ENCODE measurements at regions of chr6 and their contacts with region 1.

Region 1: DNA sequence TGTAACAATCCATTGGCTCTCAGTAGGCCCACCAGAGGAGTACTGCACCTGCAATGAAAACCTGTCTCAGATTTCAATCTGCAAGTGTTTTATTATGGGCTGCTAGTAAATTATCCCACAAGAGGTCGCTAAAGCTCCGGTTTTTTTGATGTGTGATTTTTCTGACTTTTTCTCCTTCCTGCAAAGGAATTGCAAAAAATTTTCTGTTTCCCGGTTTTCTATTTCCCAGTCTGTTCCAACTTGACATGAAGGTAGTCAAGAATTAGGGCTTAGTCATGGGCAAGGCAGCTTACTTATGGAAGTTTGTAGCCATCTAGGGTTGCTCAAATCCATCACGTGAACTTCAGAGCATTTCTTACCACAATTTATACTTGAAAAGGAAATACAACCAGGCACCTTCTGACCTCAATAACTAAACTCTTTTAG is 38.5 kb upstream of the AHI1 start:
- DNase-seq: peak; percentile 18
- ATAC-seq: no peak
- H3K4me3 Mint-ChIP-seq: no peak overlapping the region
- H3K27ac Mint-ChIP-seq: peak overlapping the region; percentile 70
- H3K4me1 Mint-ChIP-seq: peaks cover 33% of the 10 kb centered on the region
- H3K27me3 Mint-ChIP-seq: peaks cover 2% of the 10 kb centered on the region
- CTCF ChIP-seq: peak; percentile 87

Region 2: GRCh38 chr6:135506270-135506997 is 29.6 kb before region 1 on chr6:
- CTCF ChIA-PET with region 1: interaction called, 10 read pairs
- POLR2A ChIA-PET with region 1: no interaction called
- intact Hi-C with region 1: no loop called
- DNase-seq: peak; percentile 54
- ATAC-seq: peak; percentile 89
- H3K4me3 Mint-ChIP-seq: peak overlapping the region; percentile 35
- H3K27ac Mint-ChIP-seq: peak overlapping the region; percentile 69
- H3K4me1 Mint-ChIP-seq: peaks cover 9% of the 10 kb centered on the region
- H3K27me3 Mint-ChIP-seq: no peaks in the 10 kb centered on the region
- CTCF ChIP-seq: peak; percentile 77

Region 3: GRCh38 chr6:135577059-135577538 is 41.1 kb after region 1 on chr6:
- CTCF ChIA-PET with region 1: interaction called, 7 read pairs
- POLR2A ChIA-PET with region 1: no interaction called
- intact Hi-C with region 1: loop called (anchors 5 kb)
- DNase-seq: no peak
- ATAC-seq: peak; percentile 93
- H3K4me3 Mint-ChIP-seq: peak overlapping the region; percentile 2
- H3K27ac Mint-ChIP-seq: peak overlapping the region; percentile 92
- H3K4me1 Mint-ChIP-seq: peaks cover 34% of the 10 kb centered on the region
- H3K27me3 Mint-ChIP-seq: no peaks in the 10 kb centered on the region
- CTCF ChIP-seq: no peak

Region 4: DNA sequence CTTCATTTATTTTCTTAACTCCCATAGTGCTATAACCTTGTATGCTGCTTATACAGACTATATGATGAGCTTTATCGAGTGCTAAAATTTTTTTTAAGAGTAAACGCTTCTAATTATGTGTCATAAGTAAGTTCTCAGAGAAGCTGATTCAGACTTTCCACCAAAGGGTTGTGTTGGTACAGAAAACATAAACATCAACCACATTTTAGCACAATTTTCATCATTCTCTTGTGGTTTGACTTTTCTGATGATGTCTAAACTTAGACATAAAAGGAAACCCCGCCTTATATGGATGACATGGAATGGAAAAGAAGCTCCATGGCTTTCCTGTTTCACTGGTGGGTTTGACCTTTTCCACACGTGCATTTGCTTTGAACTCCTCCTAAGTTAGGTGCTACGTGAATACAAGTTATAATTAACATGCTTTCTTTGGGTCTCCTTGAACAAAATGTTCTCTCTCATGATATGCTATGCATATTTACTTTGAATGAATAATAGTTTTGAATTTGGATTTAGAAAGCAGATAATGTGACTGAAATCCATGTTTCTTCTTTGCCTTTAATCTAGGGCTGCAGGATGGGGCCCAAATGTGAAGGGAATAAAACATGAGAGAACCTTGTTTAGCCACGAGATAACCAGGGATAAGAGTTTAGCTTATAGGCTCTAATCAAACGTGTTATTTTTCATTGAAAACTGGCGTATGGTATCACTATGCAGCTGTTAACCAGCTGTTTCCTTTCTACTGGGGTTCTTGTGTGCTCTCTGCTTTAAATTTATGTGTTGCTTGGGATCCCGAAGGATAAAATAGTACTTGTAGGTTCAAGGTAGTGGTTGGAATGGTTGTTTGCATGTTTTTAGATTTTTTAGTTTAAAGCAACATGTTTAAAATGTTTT is 88.6 kb after region 1 on chr6:
- CTCF ChIA-PET with region 1: interaction called, 6 read pairs
- POLR2A ChIA-PET with region 1: interaction called, 4 read pairs
- intact Hi-C with region 1: loop called (anchors 5 kb)
- DNase-seq: peak; percentile 60
- ATAC-seq: peak; percentile 85
- H3K4me3 Mint-ChIP-seq: no peak overlapping the region
- H3K27ac Mint-ChIP-seq: peak overlapping the region; percentile 91
- H3K4me1 Mint-ChIP-seq: peaks cover 42% of the 10 kb centered on the region
- H3K27me3 Mint-ChIP-seq: peaks cover 3% of the 10 kb centered on the region
- CTCF ChIP-seq: no peak

Region 5: GRCh38 chr6:135658481-135658880 is 122.5 kb after region 1 on chr6:
- CTCF ChIA-PET with region 1: interaction called, 11 read pairs
- POLR2A ChIA-PET with region 1: no interaction called
- intact Hi-C with region 1: no loop called
- DNase-seq: no peak
- ATAC-seq: no peak
- H3K4me3 Mint-ChIP-seq: no peak overlapping the region
- H3K27ac Mint-ChIP-seq: no peak overlapping the region
- H3K4me1 Mint-ChIP-seq: peaks cover 3% of the 10 kb centered on the region
- H3K27me3 Mint-ChIP-seq: peaks cover 3% of the 10 kb centered on the region
- CTCF ChIP-seq: no peak

Region 6: GRCh38 chr6:135870722-135871121 is 334.7 kb after region 1 on chr6:
- CTCF ChIA-PET with region 1: no interaction called
- POLR2A ChIA-PET with region 1: no interaction called
- intact Hi-C with region 1: no loop called
- DNase-seq: no peak
- ATAC-seq: no peak
- H3K4me3 Mint-ChIP-seq: no peak overlapping the region
- H3K27ac Mint-ChIP-seq: no peak overlapping the region
- H3K4me1 Mint-ChIP-seq: peaks cover 18% of the 10 kb centered on the region
- H3K27me3 Mint-ChIP-seq: no peaks in the 10 kb centered on the region
- CTCF ChIP-seq: no peak

Region 7: GRCh38 chr6:135909737-135910387 is 373.9 kb after region 1 on chr6:
- CTCF ChIA-PET with region 1: interaction called, 35 read pairs
- POLR2A ChIA-PET with region 1: no interaction called
- intact Hi-C with region 1: loop called (anchors 5 kb)
- DNase-seq: peak; percentile 74
- ATAC-seq: peak; percentile 91
- H3K4me3 Mint-ChIP-seq: no peak overlapping the region
- H3K27ac Mint-ChIP-seq: no peak overlapping the region
- H3K4me1 Mint-ChIP-seq: peaks cover 12% of the 10 kb centered on the region
- H3K27me3 Mint-ChIP-seq: no peaks in the 10 kb centered on the region
- CTCF ChIP-seq: peak; percentile 69

Measured in activated CD8-positive, alpha-beta T cell treated with anti-CD3 and anti-CD28 coated beads for 36 hours (primary cell).